AG04449 (cell line): ENCODE measurements at regions of chr2 and their contacts with region 1.

Region 1: DNA sequence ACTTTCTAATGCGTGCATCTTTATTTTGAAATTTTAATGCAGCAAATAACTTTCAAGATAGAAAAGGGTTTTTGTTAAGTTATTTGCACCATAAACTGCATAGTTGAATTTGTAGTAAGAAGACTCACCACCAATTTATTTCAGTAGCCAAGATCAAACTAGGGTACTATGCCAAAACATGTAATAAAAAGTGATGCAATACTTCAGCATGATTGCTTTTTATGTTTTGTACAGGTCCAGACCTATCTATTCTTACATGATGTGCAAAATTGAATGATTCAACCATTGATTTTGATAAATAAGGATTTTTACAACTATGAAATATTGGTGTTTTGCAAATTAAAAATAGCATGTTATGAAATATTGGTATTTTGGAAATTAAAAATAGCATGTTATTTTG is 26.7 kb downstream of the AGPS start:
- DNase-seq: peak; percentile 19
- H3K4me3 ChIP-seq: no peak overlapping the region
- CTCF ChIP-seq: no peak

Region 2: DNA sequence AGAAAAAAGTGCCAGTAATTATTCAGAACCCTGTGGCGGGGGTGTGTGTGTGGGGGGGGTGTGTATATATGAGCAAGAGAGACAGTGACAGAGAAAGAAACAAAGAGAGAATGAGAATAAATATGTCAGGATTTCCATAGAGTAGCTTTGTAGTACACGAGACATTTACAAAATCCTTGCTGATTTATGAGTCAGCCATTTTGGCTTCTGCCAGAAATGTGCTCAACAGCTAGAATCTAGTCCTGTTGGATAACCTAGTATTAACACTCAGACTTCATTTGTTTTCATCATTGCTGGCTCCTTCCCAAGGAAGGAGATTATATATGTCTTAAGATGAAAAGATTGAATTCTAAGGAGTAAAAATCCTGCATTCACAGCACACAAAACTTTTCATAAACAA is 347.2 kb before region 1 on chr2:
- CTCF ChIA-PET with region 1: no interaction called
- POLR2A ChIA-PET with region 1: no interaction called
- DNase-seq: no peak
- H3K4me3 ChIP-seq: no peak overlapping the region
- CTCF ChIP-seq: no peak

Region 3: GRCh38 chr2:177405029-177405692 is 14.1 kb before region 1 on chr2:
- CTCF ChIA-PET with region 1: interaction called, 41 read pairs
- POLR2A ChIA-PET with region 1: no interaction called
- DNase-seq: no peak
- H3K4me3 ChIP-seq: no peak overlapping the region
- CTCF ChIP-seq: no peak